KBM-7 (cell line): ENCODE measurements at regions of chr1 and their contacts with region 1.

Region 1: GRCh38 chr1:152189657-152190442 is 30.8 kb upstream of the RPTN start:
- DNase-seq: peak; percentile 61

Region 2: GRCh38 chr1:152440635-152441471 is 251.0 kb after region 1 on chr1:
- in situ Hi-C with region 1: loop called (anchors 10 kb)
- DNase-seq: peak; percentile 73

Region 3: GRCh38 chr1:152654110-152654509 is 464.3 kb after region 1 on chr1:
- in situ Hi-C with region 1: no loop called
- DNase-seq: peak; percentile 83